ENCODE measurements at regions of chr3 and their contacts with region 1.

Region 1: GRCh38 chr3:31960793-31961431 is 20.1 kb downstream of the OSBPL10 start:
- DNase-seq: no peak
- H3K4me3 ChIP-seq: peak overlapping the region in 1 of 2 donors; percentile 42
- H3K27ac ChIP-seq: peak overlapping the region; percentile 70 to 89
- H3K4me1 ChIP-seq: peaks cover 6 to 19% of the 10 kb centered on the region in 2 donors
- H3K27me3 ChIP-seq: no peaks in the 10 kb centered on the region
- CTCF ChIP-seq: no peak

Region 2: GRCh38 chr3:30924763-30925162 is 1036.1 kb before region 1 on chr3:
- intact Hi-C with region 1: loop called (anchors 5 kb)
- DNase-seq: peak in 1 of 2 donors; percentile 76
- H3K4me3 ChIP-seq: no peak overlapping the region
- H3K27ac ChIP-seq: peak overlapping the region; percentile 87 to 90
- H3K4me1 ChIP-seq: peaks cover 5 to 12% of the 10 kb centered on the region in 2 donors
- H3K27me3 ChIP-seq: no peaks in the 10 kb centered on the region
- CTCF ChIP-seq: no peak

Measured in ascending aorta (tissue), 2 donors.